ENCODE measurements at regions of chr1 and their contacts with region 1.

Region 1: GRCh38 chr1:147242439-147243227 is at the start of gene CHD1L:
- DNase-seq: peak; percentile 96
- ATAC-seq: peak; percentile 91
- H3K4me3 Mint-ChIP-seq: peak within 1 kb of the TSS; percentile 76
- H3K27ac Mint-ChIP-seq: peak within 1 kb of the TSS; percentile 84
- H3K4me1 Mint-ChIP-seq: peaks cover 39% of the 10 kb centered on the region
- H3K27me3 Mint-ChIP-seq: no peaks in the 10 kb centered on the region
- CTCF ChIP-seq: peak; percentile 74
- total RNA-seq, gene CHD1L: 80.5 to 81.1 TPM

Region 2: DNA sequence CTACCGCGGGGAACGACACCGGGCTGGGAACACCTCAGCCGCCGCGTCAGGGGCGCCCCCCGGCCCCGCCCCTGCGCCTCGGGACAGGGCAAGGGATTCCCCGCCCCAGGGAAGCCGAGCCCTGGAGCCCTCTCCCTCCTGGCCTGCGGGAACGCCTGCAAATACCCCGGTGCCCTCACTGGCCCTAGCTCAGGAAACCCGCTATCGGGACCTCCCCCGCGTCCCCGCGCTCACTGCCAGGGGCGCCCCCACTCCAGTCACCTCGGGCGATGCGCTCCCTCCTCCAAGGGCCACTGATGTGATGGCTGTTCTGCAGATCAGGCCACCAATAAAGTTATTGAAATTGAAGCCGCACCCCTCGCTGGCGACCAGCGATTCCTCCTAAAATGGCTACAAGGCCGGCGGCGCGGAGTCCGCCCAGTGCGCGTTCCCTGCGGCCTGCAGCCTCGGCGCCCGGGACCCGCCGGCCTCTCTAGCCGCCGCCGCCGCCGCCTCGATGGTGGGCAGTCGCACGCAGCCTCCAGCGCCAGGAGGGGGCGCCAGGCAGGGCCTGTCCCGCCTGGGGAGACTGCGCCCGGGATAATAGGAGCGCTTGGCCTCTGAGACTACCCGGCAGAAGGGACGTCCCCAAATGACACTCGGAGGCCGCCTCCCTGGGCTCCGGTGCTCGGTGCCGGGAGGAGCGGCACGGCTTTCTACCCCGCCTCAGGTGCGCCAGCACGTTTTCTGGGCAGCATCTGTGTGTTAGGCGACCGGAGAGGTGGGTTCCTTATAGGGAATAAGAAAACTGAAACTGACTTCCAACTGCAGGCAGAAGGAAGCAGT is 70.3 kb before region 1 on chr1 and contains the start of gene PRKAB2:
- CTCF ChIA-PET with region 1: interaction called, 80 read pairs
- POLR2A ChIA-PET with region 1: interaction called, 12 read pairs
- intact Hi-C with region 1: loop called (anchors 2 kb)
- DNase-seq: peak; percentile 94
- ATAC-seq: peak; percentile 89
- H3K4me3 Mint-ChIP-seq: peak within 1 kb of the TSS; percentile 98
- H3K27ac Mint-ChIP-seq: peak within 1 kb of the TSS; percentile 99
- H3K4me1 Mint-ChIP-seq: peaks cover 38% of the 10 kb centered on the region
- H3K27me3 Mint-ChIP-seq: no peaks in the 10 kb centered on the region
- CTCF ChIP-seq: peak; percentile 73
- total RNA-seq, gene PRKAB2: 5.8 to 6.4 TPM

Region 3: DNA sequence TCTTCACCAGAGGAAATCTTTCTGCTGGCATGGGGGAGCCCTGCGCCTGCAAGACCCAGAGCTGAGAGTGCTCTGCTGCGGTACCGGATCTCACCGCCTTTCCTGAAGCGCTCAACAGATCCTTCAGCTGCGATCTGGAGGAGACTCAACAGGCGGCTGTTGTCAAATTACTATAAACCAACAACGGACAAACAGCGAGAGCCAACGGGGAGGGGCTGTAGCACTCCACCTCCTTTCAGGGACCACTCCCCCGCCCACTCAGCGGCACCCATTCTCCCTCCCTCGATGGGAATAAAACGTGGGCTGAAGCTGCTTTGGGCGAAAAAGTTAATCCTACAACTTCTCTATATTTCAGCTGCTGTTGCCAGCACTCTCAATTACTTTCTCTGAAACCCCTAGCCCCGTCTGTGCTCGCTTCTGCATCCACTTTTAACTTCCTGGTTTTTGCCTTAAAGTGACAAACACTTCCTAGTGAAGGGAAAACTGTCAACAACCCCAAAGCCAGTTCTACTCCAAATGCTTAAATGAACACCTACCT is 17.4 kb before region 1 on chr1 and contains the start of gene FMO5:
- CTCF ChIA-PET with region 1: interaction called, 11 read pairs
- POLR2A ChIA-PET with region 1: interaction called, 6 read pairs
- intact Hi-C with region 1: no loop called
- DNase-seq: peak; percentile 67
- ATAC-seq: peak; percentile 97
- H3K4me3 Mint-ChIP-seq: peak within 1 kb of the TSS; percentile 93
- H3K27ac Mint-ChIP-seq: peak within 1 kb of the TSS; percentile 86
- H3K4me1 Mint-ChIP-seq: peaks cover 14% of the 10 kb centered on the region
- H3K27me3 Mint-ChIP-seq: no peaks in the 10 kb centered on the region
- CTCF ChIP-seq: peak; percentile 38
- total RNA-seq, gene FMO5: 0.16 TPM in 1 of 2 experiments, not detected in the other

Region 4: GRCh38 chr1:147273409-147274336 is 31.0 kb after region 1 on chr1:
- CTCF ChIA-PET with region 1: interaction called, 12 read pairs
- POLR2A ChIA-PET with region 1: no interaction called
- intact Hi-C with region 1: no loop called
- DNase-seq: peak; percentile 27
- ATAC-seq: peak; percentile 49
- H3K4me3 Mint-ChIP-seq: no peak overlapping the region
- H3K27ac Mint-ChIP-seq: no peak overlapping the region
- H3K4me1 Mint-ChIP-seq: no peaks in the 10 kb centered on the region
- H3K27me3 Mint-ChIP-seq: no peaks in the 10 kb centered on the region
- CTCF ChIP-seq: peak; percentile 63

Region 5: GRCh38 chr1:147313250-147313649 is 70.6 kb after region 1 on chr1:
- CTCF ChIA-PET with region 1: no interaction called
- POLR2A ChIA-PET with region 1: no interaction called
- intact Hi-C with region 1: no loop called
- DNase-seq: no peak
- ATAC-seq: no peak
- H3K4me3 Mint-ChIP-seq: no peak overlapping the region
- H3K27ac Mint-ChIP-seq: no peak overlapping the region
- H3K4me1 Mint-ChIP-seq: no peaks in the 10 kb centered on the region
- H3K27me3 Mint-ChIP-seq: peaks cover 1% of the 10 kb centered on the region
- CTCF ChIP-seq: no peak

Measured in activated CD8-positive, alpha-beta T cell treated with anti-CD3 and anti-CD28 coated beads for 36 hours (primary cell).